Caco-2 (cell line): ENCODE measurements at regions of chr2 and their contacts with region 1.

Region 1: DNA sequence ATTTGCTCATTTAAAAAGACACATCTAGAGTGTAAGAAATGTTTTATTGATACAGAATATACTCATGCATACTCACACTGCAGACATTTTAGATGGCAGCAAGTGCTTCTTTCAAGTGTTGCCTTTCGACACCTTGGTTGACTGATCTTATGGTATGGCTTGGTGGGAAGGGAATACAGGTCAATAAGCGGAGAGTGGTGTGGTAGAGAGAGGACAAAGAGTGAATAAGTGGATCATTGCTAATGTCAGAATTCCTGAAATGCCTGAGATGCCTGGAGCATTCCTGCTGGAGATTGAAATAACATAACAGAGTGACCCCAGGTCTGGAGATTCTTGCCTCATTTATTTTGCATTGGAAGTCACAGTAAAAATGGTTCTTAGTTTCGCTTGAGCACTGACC is 76.7 kb downstream of the RND3 start:
- DNase-seq: peak; percentile 68 to 77
- H3K4me3 ChIP-seq: no peak overlapping the region
- H3K4me3 Mint-ChIP-seq: peak overlapping the region; percentile 20
- H3K27ac Mint-ChIP-seq: peak overlapping the region; percentile 80
- H3K4me1 ChIP-seq: peaks cover 68% of the 10 kb centered on the region
- H3K4me1 Mint-ChIP-seq: peaks cover 54% of the 10 kb centered on the region
- H3K27me3 ChIP-seq: no peaks in the 10 kb centered on the region
- H3K27me3 Mint-ChIP-seq: no peaks in the 10 kb centered on the region
- CTCF ChIP-seq: no peak

Region 2: DNA sequence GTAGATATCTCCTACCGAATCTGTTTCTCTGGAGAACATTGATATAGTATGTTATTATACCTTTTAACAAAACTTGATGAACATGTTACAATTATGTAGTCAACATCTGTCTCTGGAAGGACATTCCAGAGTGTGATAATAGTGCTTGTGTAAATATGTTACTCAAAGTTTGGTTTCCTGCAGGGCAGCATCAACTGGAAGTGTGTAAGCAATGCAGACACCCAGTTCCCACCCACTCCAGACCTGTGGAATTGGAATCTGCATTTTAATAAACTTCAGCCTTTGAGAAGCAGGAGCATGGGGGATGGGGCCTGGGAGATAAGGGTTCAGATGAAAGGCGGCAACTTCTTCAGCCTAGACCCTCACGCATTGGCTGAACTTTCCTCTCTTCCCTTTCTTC is 322.3 kb before region 1 on chr2:
- CTCF ChIA-PET with region 1: no interaction called
- POLR2A ChIA-PET with region 1: no interaction called
- intact Hi-C with region 1: loop called (anchors 5 kb)
- DNase-seq: peak; percentile 79 to 89
- H3K4me3 ChIP-seq: no peak overlapping the region
- H3K4me3 Mint-ChIP-seq: peak overlapping the region; percentile 47
- H3K27ac Mint-ChIP-seq: peak overlapping the region; percentile 97
- H3K4me1 ChIP-seq: peaks cover 27% of the 10 kb centered on the region
- H3K4me1 Mint-ChIP-seq: peaks cover 28% of the 10 kb centered on the region
- H3K27me3 ChIP-seq: no peaks in the 10 kb centered on the region
- H3K27me3 Mint-ChIP-seq: no peaks in the 10 kb centered on the region
- CTCF ChIP-seq: no peak

Region 3: DNA sequence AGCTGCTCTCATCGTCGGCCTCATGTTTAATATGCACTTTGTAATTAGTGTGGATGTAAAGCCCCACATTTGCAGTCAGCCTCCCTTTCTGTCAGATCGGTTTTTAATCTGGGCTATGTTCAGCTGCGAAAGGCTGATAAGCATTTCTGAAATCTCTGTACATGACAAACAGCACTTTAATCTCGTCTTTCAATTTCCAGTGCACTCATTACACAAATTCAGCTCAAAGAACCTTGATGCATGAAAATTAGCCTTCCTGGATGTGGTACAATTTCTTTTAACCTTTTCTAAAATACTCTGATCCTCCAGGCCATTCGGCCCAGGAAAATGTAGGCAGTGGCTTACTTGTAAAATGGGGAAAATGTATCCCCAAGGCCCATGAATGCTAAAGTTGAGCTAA is 188.4 kb before region 1 on chr2:
- CTCF ChIA-PET with region 1: no interaction called
- POLR2A ChIA-PET with region 1: no interaction called
- intact Hi-C with region 1: loop called (anchors 5 kb)
- DNase-seq: no peak
- H3K4me3 ChIP-seq: no peak overlapping the region
- H3K4me3 Mint-ChIP-seq: no peak overlapping the region
- H3K27ac Mint-ChIP-seq: peak overlapping the region; percentile 40
- H3K4me1 ChIP-seq: peaks cover 39% of the 10 kb centered on the region
- H3K4me1 Mint-ChIP-seq: peaks cover 25% of the 10 kb centered on the region
- H3K27me3 ChIP-seq: no peaks in the 10 kb centered on the region
- H3K27me3 Mint-ChIP-seq: no peaks in the 10 kb centered on the region
- CTCF ChIP-seq: no peak

Region 4: GRCh38 chr2:150376565-150377335 is 34.1 kb before region 1 on chr2:
- CTCF ChIA-PET with region 1: interaction called, 4 read pairs
- POLR2A ChIA-PET with region 1: interaction called, 4 read pairs
- intact Hi-C with region 1: loop called (anchors 1 kb)
- DNase-seq: peak; percentile 87 to 88
- H3K4me3 ChIP-seq: no peak overlapping the region
- H3K4me3 Mint-ChIP-seq: no peak overlapping the region
- H3K27ac Mint-ChIP-seq: peak overlapping the region; percentile 87
- H3K4me1 ChIP-seq: peaks cover 32% of the 10 kb centered on the region
- H3K4me1 Mint-ChIP-seq: peaks cover 17% of the 10 kb centered on the region
- H3K27me3 ChIP-seq: no peaks in the 10 kb centered on the region
- H3K27me3 Mint-ChIP-seq: no peaks in the 10 kb centered on the region
- CTCF ChIP-seq: no peak

Region 5: DNA sequence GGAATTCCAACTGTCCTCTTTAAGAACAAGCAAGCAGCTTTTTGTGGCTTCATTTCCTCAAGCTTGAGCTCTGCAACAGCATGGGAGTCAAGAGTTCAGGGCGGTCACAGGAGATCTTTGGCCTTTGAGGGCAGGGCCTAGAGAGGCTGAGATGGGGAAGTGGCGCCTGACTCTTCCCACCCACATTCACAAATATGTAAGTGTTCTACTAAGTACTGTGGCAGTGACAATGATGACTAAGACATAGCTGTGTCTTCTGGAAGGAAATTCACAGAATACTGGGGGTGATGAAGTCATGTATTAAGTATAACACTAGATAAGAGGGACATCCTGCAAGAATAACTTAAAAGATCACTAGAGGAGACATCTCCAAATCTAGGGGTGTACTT is 61.7 kb after region 1 on chr2:
- CTCF ChIA-PET with region 1: interaction called, 3 read pairs
- POLR2A ChIA-PET with region 1: interaction called, 3 read pairs
- intact Hi-C with region 1: loop called (anchors 1 kb)
- DNase-seq: peak; percentile 34 to 69
- H3K4me3 ChIP-seq: no peak overlapping the region
- H3K4me3 Mint-ChIP-seq: no peak overlapping the region
- H3K27ac Mint-ChIP-seq: peak overlapping the region; percentile 45
- H3K4me1 ChIP-seq: peaks cover 82% of the 10 kb centered on the region
- H3K4me1 Mint-ChIP-seq: peaks cover 67% of the 10 kb centered on the region
- H3K27me3 ChIP-seq: no peaks in the 10 kb centered on the region
- H3K27me3 Mint-ChIP-seq: no peaks in the 10 kb centered on the region
- CTCF ChIP-seq: no peak